Activated CD8-positive, alpha-beta T cell treated with anti-CD3 and anti-CD28 coated beads, Interleukin-2, amount 10 ng/mL, durations not matched to agents 7 days and 5 days (primary cell): ENCODE measurements at regions of chr10 and their contacts with region 1.

Region 1: GRCh38 chr10:67779465-67780203 is 58.4 kb downstream of the DNAJC12 start:
- DNase-seq: peak; percentile 86
- ATAC-seq: peak; percentile 75
- H3K4me3 Mint-ChIP-seq: no peak overlapping the region
- H3K27ac Mint-ChIP-seq: no peak overlapping the region
- H3K4me1 Mint-ChIP-seq: peaks cover 46% of the 10 kb centered on the region
- H3K27me3 Mint-ChIP-seq: no peaks in the 10 kb centered on the region

Region 2: GRCh38 chr10:67520924-67521520 is 258.6 kb before region 1 on chr10:
- CTCF ChIA-PET with region 1: interaction called, 19 read pairs
- POLR2A ChIA-PET with region 1: no interaction called
- DNase-seq: peak; percentile 54
- ATAC-seq: peak; percentile 68
- H3K4me3 Mint-ChIP-seq: no peak overlapping the region
- H3K27ac Mint-ChIP-seq: no peak overlapping the region
- H3K4me1 Mint-ChIP-seq: no peaks in the 10 kb centered on the region
- H3K27me3 Mint-ChIP-seq: peaks cover 2% of the 10 kb centered on the region

Region 3: GRCh38 chr10:67659497-67659896 is 120.1 kb before region 1 on chr10:
- CTCF ChIA-PET with region 1: interaction called, 107 read pairs
- POLR2A ChIA-PET with region 1: no interaction called
- DNase-seq: no peak
- ATAC-seq: no peak
- H3K4me3 Mint-ChIP-seq: no peak overlapping the region
- H3K27ac Mint-ChIP-seq: no peak overlapping the region
- H3K4me1 Mint-ChIP-seq: no peaks in the 10 kb centered on the region
- H3K27me3 Mint-ChIP-seq: peaks cover 16% of the 10 kb centered on the region

Region 4: DNA sequence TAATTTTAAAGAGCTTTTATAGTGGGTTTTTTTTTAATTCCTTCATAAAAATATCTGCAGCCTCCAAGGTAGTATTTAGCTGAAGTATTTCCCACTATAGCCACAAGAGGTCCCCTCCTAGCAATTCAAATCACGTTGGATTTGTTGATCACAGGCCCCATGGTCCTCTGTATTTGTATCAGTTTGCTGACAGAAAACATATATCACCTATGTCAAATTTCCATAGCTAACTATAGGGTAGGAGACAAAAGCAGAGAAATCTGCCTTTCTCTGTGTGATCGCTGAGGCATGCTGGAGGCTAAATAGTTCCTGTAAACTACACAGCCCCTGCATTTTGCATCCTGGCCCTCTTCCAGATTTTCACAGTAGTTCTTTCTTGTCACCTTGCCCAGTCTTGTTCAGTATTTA is 81.9 kb before region 1 on chr10:
- CTCF ChIA-PET with region 1: interaction called, 295 read pairs
- POLR2A ChIA-PET with region 1: interaction called, 6 read pairs
- DNase-seq: peak; percentile 42
- ATAC-seq: peak; percentile 79
- H3K4me3 Mint-ChIP-seq: no peak overlapping the region
- H3K27ac Mint-ChIP-seq: no peak overlapping the region
- H3K4me1 Mint-ChIP-seq: peaks cover 10% of the 10 kb centered on the region
- H3K27me3 Mint-ChIP-seq: peaks cover 36% of the 10 kb centered on the region

Region 5: GRCh38 chr10:67722113-67722512 is 57.5 kb before region 1 on chr10:
- CTCF ChIA-PET with region 1: interaction called, 13 read pairs
- POLR2A ChIA-PET with region 1: no interaction called
- DNase-seq: no peak
- ATAC-seq: no peak
- H3K4me3 Mint-ChIP-seq: no peak overlapping the region
- H3K27ac Mint-ChIP-seq: no peak overlapping the region
- H3K4me1 Mint-ChIP-seq: no peaks in the 10 kb centered on the region
- H3K27me3 Mint-ChIP-seq: peaks cover 8% of the 10 kb centered on the region

Region 6: GRCh38 chr10:67735430-67735829 is 44.2 kb before region 1 on chr10:
- CTCF ChIA-PET with region 1: no interaction called
- POLR2A ChIA-PET with region 1: no interaction called
- DNase-seq: no peak
- ATAC-seq: no peak
- H3K4me3 Mint-ChIP-seq: no peak overlapping the region
- H3K27ac Mint-ChIP-seq: no peak overlapping the region
- H3K4me1 Mint-ChIP-seq: no peaks in the 10 kb centered on the region
- H3K27me3 Mint-ChIP-seq: peaks cover 5% of the 10 kb centered on the region

Region 7: GRCh38 chr10:67849331-67850011 is 69.8 kb after region 1 on chr10:
- CTCF ChIA-PET with region 1: interaction called, 13 read pairs
- POLR2A ChIA-PET with region 1: interaction called, 4 read pairs
- DNase-seq: peak; percentile 96
- ATAC-seq: peak; percentile 100
- H3K4me3 Mint-ChIP-seq: peak overlapping the region; percentile 92
- H3K27ac Mint-ChIP-seq: peak overlapping the region; percentile 98
- H3K4me1 Mint-ChIP-seq: peaks cover 13% of the 10 kb centered on the region
- H3K27me3 Mint-ChIP-seq: no peaks in the 10 kb centered on the region